ENCODE measurements at regions of chr2 and their contacts with region 1.

Region 1: GRCh38 chr2:46364797-46365457 is 67.7 kb downstream of the EPAS1 start:
- DNase-seq: peak; percentile 46 to 62 (median 52)
- H3K4me3 ChIP-seq: no peak overlapping the region
- H3K4me3 Mint-ChIP-seq: no peak overlapping the region
- H3K27ac ChIP-seq: no peak overlapping the region
- H3K27ac Mint-ChIP-seq: peak overlapping the region in 1 of 7 donors; percentile 3
- H3K4me1 ChIP-seq: peaks cover 22% of the 10 kb centered on the region
- H3K4me1 Mint-ChIP-seq: peaks cover 22 to 42% (median 34%) of the 10 kb centered on the region in 4 donors
- H3K27me3 ChIP-seq: no peaks in the 10 kb centered on the region
- H3K27me3 Mint-ChIP-seq: no peaks in the 10 kb centered on the region

Region 2: DNA sequence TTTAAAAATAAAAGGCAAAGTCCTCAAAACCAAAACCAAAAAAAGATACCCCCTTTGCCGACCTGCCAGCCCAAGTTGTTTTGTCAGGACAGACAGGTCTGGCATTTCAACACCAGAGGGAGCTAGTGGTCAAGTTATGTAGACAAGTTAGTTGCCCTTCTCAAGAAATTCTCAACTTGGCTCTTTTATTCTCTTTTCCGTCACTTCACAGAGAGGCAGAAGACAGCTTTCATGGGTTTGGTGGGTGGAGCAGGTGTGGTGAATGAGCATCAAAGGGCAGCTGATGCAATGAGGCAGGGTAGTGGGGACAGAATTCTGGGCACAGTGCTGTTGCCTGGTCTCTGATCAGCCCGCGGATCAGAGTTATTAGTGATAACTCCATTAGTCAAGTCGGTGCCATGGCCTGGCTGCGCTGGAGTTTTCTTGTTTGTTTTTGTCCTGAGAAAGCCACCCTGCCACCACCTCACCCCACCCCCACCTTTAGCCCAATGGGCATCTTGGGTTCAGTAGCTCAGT is 371.4 kb before region 1 on chr2:
- CTCF ChIA-PET with region 1: interaction called, 12 read pairs
- POLR2A ChIA-PET with region 1: no interaction called
- intact Hi-C with region 1: loop called (anchors 1 kb)
- DNase-seq: peak; percentile 50 to 61 (median 54)
- H3K4me3 ChIP-seq: no peak overlapping the region
- H3K4me3 Mint-ChIP-seq: no peak overlapping the region
- H3K27ac ChIP-seq: no peak overlapping the region
- H3K27ac Mint-ChIP-seq: no peak overlapping the region
- H3K4me1 ChIP-seq: no peaks in the 10 kb centered on the region
- H3K4me1 Mint-ChIP-seq: peaks cover 2 to 6% (median 4%) of the 10 kb centered on the region in 4 donors
- H3K27me3 ChIP-seq: no peaks in the 10 kb centered on the region
- H3K27me3 Mint-ChIP-seq: no peaks in the 10 kb centered on the region

Region 3: GRCh38 chr2:46062637-46063412 is 302.1 kb before region 1 on chr2:
- CTCF ChIA-PET with region 1: interaction called, 48 read pairs
- POLR2A ChIA-PET with region 1: no interaction called
- intact Hi-C with region 1: loop called (anchors 1 kb)
- DNase-seq: peak; percentile 45 to 64 (median 52)
- H3K4me3 ChIP-seq: no peak overlapping the region
- H3K4me3 Mint-ChIP-seq: no peak overlapping the region
- H3K27ac ChIP-seq: no peak overlapping the region
- H3K27ac Mint-ChIP-seq: no peak overlapping the region
- H3K4me1 ChIP-seq: no peaks in the 10 kb centered on the region
- H3K4me1 Mint-ChIP-seq: peaks cover 8 to 14% (median 11%) of the 10 kb centered on the region in 4 donors
- H3K27me3 ChIP-seq: no peaks in the 10 kb centered on the region
- H3K27me3 Mint-ChIP-seq: peaks cover 0 to 2% of the 10 kb centered on the region in 2 donors

Region 4: GRCh38 chr2:46296840-46297545 is 67.9 kb before region 1 on chr2 and contains the start of gene EPAS1:
- CTCF ChIA-PET with region 1: interaction called, 4 read pairs
- POLR2A ChIA-PET with region 1: no interaction called
- intact Hi-C with region 1: loop called (anchors 5 kb)
- DNase-seq: peak; percentile 71 to 88 (median 75)
- H3K4me3 ChIP-seq: peak within 1 kb of the TSS; percentile 45 to 72
- H3K4me3 Mint-ChIP-seq: peak within 1 kb of the TSS; percentile 87 to 96 (median 92)
- H3K27ac ChIP-seq: no peak within 1 kb of the TSS
- H3K27ac Mint-ChIP-seq: peak within 1 kb of the TSS; percentile 68 to 94 (median 89)
- H3K4me1 ChIP-seq: peaks cover 29% of the 10 kb centered on the region
- H3K4me1 Mint-ChIP-seq: peaks cover 14 to 47% (median 24%) of the 10 kb centered on the region in 4 donors
- H3K27me3 ChIP-seq: peaks cover 21% of the 10 kb centered on the region
- H3K27me3 Mint-ChIP-seq: peaks cover 22 to 26% of the 10 kb centered on the region in 2 donors
- total RNA-seq, gene EPAS1: 2.3 to 2.7 TPM

Region 5: DNA sequence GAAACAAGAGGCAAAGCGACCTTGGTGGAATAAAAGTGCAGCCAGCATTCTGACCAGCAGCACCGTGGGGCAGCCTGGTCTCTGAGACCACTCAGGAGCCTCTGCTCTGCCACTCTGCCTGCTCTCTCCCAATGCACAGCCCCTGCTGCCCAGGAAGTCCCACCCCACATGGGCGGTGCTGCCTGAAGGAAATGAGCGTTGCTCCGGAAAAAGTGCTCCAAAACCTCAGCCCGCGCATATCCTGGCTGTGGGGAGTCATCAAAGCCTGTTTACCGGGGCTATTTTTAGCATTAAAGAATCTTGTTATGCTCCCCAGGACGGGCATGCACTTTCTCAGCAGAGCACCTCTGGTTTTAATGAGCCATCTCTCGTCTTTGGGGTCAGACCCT is 13.2 kb before region 1 on chr2:
- CTCF ChIA-PET with region 1: interaction called, 6 read pairs
- POLR2A ChIA-PET with region 1: interaction called, 3 read pairs
- intact Hi-C with region 1: loop called (anchors 1 kb)
- DNase-seq: peak; percentile 74 to 82 (median 77)
- H3K4me3 ChIP-seq: peak overlapping the region; percentile 5 to 37
- H3K4me3 Mint-ChIP-seq: peak overlapping the region; percentile 78 to 95 (median 86)
- H3K27ac ChIP-seq: peak overlapping the region; percentile 27
- H3K27ac Mint-ChIP-seq: peak overlapping the region; percentile 86 to 96 (median 92)
- H3K4me1 ChIP-seq: peaks cover 55% of the 10 kb centered on the region
- H3K4me1 Mint-ChIP-seq: peaks cover 49 to 87% (median 72%) of the 10 kb centered on the region in 4 donors
- H3K27me3 ChIP-seq: no peaks in the 10 kb centered on the region
- H3K27me3 Mint-ChIP-seq: no peaks in the 10 kb centered on the region

Measured in CD4-positive, alpha-beta memory T cell (primary cell).